Aorta (tissue), 5 donors: ENCODE measurements at regions of chr16 and their contacts with region 1.

Region 1: DNA sequence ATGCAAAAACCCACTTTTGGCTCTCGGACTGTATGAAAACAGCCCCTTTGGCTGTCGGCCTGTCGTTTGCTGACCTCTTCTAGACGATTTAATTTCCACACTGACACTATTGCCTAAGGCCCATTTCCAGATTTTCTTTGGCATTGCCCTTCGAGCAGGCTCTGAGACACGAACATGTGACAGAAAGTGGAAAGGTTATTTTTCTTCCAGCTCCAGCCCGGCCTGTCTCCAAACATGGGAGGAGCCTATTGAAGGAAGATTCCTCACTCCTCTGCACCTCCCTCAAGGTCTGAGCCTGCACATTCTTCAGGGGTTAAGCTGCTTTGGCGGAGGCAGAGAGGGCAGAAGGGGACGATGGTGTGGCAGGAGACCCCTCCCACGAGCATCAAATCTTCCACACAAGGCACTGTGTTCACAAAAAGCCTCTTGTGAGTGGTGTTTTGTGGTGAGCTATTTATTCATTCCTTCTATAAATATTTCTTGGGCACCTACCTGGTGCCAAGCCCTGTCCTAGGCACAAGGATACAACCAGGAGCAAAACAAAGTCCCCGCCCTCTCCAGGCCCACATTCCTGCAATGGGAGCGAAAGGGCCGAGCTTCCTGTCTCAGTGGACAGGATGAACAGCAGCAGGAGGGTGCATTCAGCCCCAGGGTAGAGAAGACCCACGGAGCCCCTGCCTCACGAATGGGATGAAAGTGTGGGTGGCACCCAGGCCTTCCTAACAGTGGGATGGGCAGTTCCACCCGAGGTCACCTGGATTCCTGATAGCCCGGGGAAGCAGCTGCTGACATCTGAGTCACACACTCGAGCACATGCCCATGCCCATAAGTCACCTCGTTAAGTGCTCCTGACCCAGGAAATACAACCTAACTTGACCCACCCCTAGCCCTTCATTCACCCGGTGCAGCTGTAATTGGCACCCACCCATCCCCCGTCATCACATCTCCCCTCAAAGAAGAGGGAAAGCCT is 85.6 kb upstream of the FOXF1 start:
- DNase-seq: no peak
- ATAC-seq: no peak
- H3K4me3 ChIP-seq: no peak overlapping the region
- H3K27ac ChIP-seq: no peak overlapping the region
- H3K4me1 ChIP-seq: no peaks in the 10 kb centered on the region
- H3K27me3 ChIP-seq: no peaks in the 10 kb centered on the region

Region 2: GRCh38 chr16:86363057-86363490 is 61.6 kb before region 1 on chr16:
- intact Hi-C with region 1: loop called in 1 of 2 experiments (anchors 5 kb)
- DNase-seq: peak in 1 of 2 donors; percentile 42
- ATAC-seq: no peak
- H3K4me3 ChIP-seq: no peak overlapping the region
- H3K27ac ChIP-seq: no peak overlapping the region
- H3K4me1 ChIP-seq: no peaks in the 10 kb centered on the region
- H3K27me3 ChIP-seq: no peaks in the 10 kb centered on the region

Region 3: GRCh38 chr16:86491256-86492023 is 66.8 kb after region 1 on chr16:
- intact Hi-C with region 1: no loop called
- DNase-seq: peak in 1 of 2 donors; percentile 42
- ATAC-seq: no peak
- H3K4me3 ChIP-seq: no peak overlapping the region
- H3K27ac ChIP-seq: no peak overlapping the region
- H3K4me1 ChIP-seq: no peaks in the 10 kb centered on the region
- H3K27me3 ChIP-seq: peaks cover 0 to 5% of the 10 kb centered on the region in 2 donors